ENCODE measurements at regions of chrX and their contacts with region 1.

Region 1: DNA sequence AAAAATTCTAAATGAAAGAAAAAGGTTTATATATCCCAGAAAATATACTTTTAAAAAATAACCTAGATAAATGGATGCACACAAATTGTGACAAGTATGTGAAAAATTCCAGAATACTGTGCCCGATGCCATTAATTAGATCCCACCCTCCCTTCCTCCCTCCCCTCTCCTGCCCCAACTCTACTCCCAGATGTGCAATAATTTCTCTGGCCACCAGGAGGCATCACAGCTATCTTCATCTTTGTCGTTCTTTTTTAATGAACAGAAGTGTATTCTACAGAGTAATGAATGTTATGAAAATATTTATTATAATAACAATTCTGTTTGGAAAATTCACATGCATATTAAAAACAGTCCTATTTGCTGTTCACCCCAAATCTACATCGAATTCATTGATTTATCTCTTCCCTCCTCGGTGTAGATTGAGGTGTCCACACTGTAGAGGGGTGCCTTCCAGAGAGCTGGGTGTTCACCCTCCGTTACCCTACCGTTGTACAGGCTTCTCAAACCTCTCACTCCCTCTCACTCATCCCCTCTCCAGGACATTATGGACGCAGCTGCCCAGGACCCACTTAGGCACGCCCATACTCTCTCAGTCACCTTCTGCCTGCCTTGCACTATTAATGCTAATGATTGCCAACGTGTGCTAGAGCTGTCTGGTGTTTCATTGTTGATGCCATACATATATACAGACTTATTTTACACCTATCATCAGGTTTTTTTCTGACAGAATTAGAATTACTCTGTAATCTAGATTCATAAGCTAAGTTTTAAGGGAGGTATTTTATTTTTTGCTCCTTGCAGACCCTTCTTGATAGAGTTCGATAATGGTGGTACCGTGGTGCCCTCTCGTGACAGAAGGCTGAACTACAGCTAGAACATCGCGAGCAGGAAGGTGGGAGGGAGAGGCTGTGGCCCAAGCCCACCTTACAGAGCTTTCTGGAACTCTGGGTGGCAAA is 14.1 kb downstream of the RAB40AL start:
- DNase-seq: peak; percentile 9
- H3K4me3 ChIP-seq: no peak overlapping the region
- H3K27ac ChIP-seq: no peak overlapping the region
- H3K4me1 ChIP-seq: no peaks in the 10 kb centered on the region
- H3K27me3 ChIP-seq: no peaks in the 10 kb centered on the region
- CTCF ChIP-seq: peak in 3 of 4 experiments; percentile 24 to 54 (median 48)
- POLR2A ChIP-seq: no peak

Region 2: GRCh38 chrX:103157496-103158320 is 206.5 kb after region 1 on chrX:
- intact Hi-C with region 1: loop called (anchors 5 kb)
- DNase-seq: no peak
- H3K4me3 ChIP-seq: no peak overlapping the region
- H3K27ac ChIP-seq: no peak overlapping the region
- H3K4me1 ChIP-seq: no peaks in the 10 kb centered on the region
- H3K27me3 ChIP-seq: no peaks in the 10 kb centered on the region
- CTCF ChIP-seq: peak in 3 of 4 experiments; percentile 14 to 38 (median 17)
- POLR2A ChIP-seq: no peak

Region 3: GRCh38 chrX:103175944-103176753 is 225.0 kb after region 1 on chrX:
- intact Hi-C with region 1: loop called (anchors 5 kb)
- DNase-seq: peak; percentile 21
- H3K4me3 ChIP-seq: no peak overlapping the region
- H3K27ac ChIP-seq: no peak overlapping the region
- H3K4me1 ChIP-seq: no peaks in the 10 kb centered on the region
- H3K27me3 ChIP-seq: no peaks in the 10 kb centered on the region
- CTCF ChIP-seq: peak in 3 of 4 experiments; percentile 37 to 61 (median 59)
- POLR2A ChIP-seq: no peak

Measured in prostate gland (tissue), 2 donors.